ENCODE measurements at regions of chr10 and their contacts with region 1.

Region 1: DNA sequence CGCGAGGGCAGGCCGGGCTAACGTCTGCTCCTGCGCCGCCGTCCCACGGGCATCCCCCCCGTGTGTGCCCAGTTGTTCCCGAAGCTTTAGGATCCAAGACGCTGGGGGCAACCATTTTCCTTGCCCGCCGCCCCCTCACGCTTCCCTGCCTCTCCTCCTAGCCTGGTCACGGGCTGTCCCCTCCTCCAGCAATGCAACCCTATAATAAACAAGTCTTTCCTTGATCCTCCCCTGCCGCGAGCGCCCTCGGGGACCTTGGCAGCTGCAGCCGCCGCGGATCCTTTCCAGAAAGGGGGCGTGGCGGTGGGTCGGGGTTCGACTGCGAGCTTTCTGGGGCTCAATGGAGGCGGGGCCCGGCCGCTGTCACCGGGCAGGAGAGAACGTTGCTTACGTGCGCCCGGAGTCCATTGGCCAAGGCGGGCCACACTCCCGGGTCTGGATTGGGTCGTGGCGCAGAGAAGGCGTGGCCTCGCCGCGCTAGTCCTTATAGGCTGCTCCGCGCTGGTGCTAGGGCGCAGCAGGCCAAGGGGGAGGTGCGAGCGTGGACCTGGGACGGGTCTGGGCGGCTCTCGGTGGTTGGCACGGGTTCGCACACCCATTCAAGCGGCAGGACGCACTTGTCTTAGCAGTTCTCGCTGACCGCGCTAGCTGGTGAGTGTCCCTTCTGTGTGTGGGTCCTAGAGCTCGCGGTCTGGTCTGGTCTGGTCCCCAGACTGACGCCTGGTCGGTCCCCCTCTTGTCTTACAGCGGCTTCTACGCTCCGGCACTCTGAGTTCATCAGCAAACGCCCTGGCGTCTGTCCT is at the start of gene DDIT4:
- DNase-seq: peak; percentile 100
- ATAC-seq: peak; percentile 86
- H3K4me3 Mint-ChIP-seq: peak within 1 kb of the TSS; percentile 100
- H3K27ac Mint-ChIP-seq: peak within 1 kb of the TSS; percentile 97
- H3K4me1 Mint-ChIP-seq: peaks cover 43% of the 10 kb centered on the region
- H3K27me3 Mint-ChIP-seq: no peaks in the 10 kb centered on the region
- CTCF ChIP-seq: no peak
- total RNA-seq, gene DDIT4: 1,071 to 1,096 TPM

Region 2: GRCh38 chr10:72215652-72216549 is 57.7 kb before region 1 on chr10 and contains the starts of genes ANAPC16 and ASCC1:
- CTCF ChIA-PET with region 1: interaction called, 7 read pairs
- POLR2A ChIA-PET with region 1: interaction called, 18 read pairs
- intact Hi-C with region 1: no loop called
- DNase-seq: peak; percentile 94
- ATAC-seq: peak; percentile 85
- H3K4me3 Mint-ChIP-seq: peak within 1 kb of the TSS; percentile 93
- H3K27ac Mint-ChIP-seq: peak within 1 kb of the TSS; percentile 95
- H3K4me1 Mint-ChIP-seq: peaks cover 40% of the 10 kb centered on the region
- H3K27me3 Mint-ChIP-seq: no peaks in the 10 kb centered on the region
- CTCF ChIP-seq: no peak
- total RNA-seq, gene ANAPC16: 94.6 to 101 TPM
- total RNA-seq, gene ASCC1: 61.6 to 66.2 TPM

Region 3: GRCh38 chr10:72254813-72255568 is 18.6 kb before region 1 on chr10:
- CTCF ChIA-PET with region 1: interaction called, 35 read pairs
- POLR2A ChIA-PET with region 1: interaction called, 99 read pairs
- intact Hi-C with region 1: no loop called
- DNase-seq: peak; percentile 65
- ATAC-seq: peak; percentile 58
- H3K4me3 Mint-ChIP-seq: peak overlapping the region; percentile 66
- H3K27ac Mint-ChIP-seq: peak overlapping the region; percentile 92
- H3K4me1 Mint-ChIP-seq: peaks cover 65% of the 10 kb centered on the region
- H3K27me3 Mint-ChIP-seq: no peaks in the 10 kb centered on the region
- CTCF ChIP-seq: no peak

Region 4: DNA sequence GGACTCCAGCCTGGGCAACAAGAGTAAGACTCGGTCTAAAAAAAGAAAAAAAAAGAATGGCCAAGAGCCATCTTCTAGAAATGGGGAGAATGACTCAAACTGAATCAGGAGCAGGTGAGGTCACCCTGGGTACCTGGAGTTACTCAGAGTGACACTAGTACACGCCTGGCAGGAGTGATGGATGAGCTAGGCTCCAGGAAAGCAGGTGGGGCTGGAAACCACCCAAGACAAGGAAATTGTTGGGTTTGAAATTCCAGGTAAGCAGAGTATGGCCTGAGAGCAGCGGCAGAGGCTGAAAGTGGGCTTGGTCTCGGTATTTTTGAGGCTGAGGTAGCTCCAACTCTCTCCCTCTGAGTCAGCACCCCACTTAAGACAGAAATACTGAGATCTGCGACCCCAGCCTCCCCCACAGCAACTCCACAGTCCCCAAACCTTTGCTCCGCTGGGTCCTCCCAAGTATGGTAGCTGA is 18.6 kb after region 1 on chr10:
- CTCF ChIA-PET with region 1: interaction called, 36 read pairs
- POLR2A ChIA-PET with region 1: interaction called, 269 read pairs
- intact Hi-C with region 1: no loop called
- DNase-seq: peak; percentile 88
- ATAC-seq: peak; percentile 54
- H3K4me3 Mint-ChIP-seq: peak overlapping the region; percentile 41
- H3K27ac Mint-ChIP-seq: peak overlapping the region; percentile 99
- H3K4me1 Mint-ChIP-seq: peaks cover 55% of the 10 kb centered on the region
- H3K27me3 Mint-ChIP-seq: no peaks in the 10 kb centered on the region
- CTCF ChIP-seq: no peak

Region 5: GRCh38 chr10:72308320-72308987 is 34.8 kb after region 1 on chr10:
- CTCF ChIA-PET with region 1: interaction called, 5 read pairs
- POLR2A ChIA-PET with region 1: interaction called, 62 read pairs
- intact Hi-C with region 1: no loop called
- DNase-seq: peak; percentile 69
- ATAC-seq: peak; percentile 51
- H3K4me3 Mint-ChIP-seq: no peak overlapping the region
- H3K27ac Mint-ChIP-seq: peak overlapping the region; percentile 86
- H3K4me1 Mint-ChIP-seq: peaks cover 68% of the 10 kb centered on the region
- H3K27me3 Mint-ChIP-seq: no peaks in the 10 kb centered on the region
- CTCF ChIP-seq: no peak

Measured in activated CD8-positive, alpha-beta T cell treated with anti-CD3 and anti-CD28 coated beads for 36 hours (primary cell).